Pancreas (tissue), 10 donors: ENCODE measurements at regions of chr12 and their contacts with region 1.

Region 1: GRCh38 chr12:13534645-13535398 is 338.3 kb downstream of the EMP1 start:
- DNase-seq: peak; percentile 22 to 88 (median 50)
- ATAC-seq: peak in 3 of 4 donors; percentile 69 to 79 (median 74)
- H3K4me3 ChIP-seq: no peak overlapping the region
- H3K27ac ChIP-seq: no peak overlapping the region
- H3K4me1 ChIP-seq: no peaks in the 10 kb centered on the region
- H3K27me3 ChIP-seq: no peaks in the 10 kb centered on the region
- CTCF ChIP-seq: peak; percentile 73 to 84 (median 82)

Region 2: DNA sequence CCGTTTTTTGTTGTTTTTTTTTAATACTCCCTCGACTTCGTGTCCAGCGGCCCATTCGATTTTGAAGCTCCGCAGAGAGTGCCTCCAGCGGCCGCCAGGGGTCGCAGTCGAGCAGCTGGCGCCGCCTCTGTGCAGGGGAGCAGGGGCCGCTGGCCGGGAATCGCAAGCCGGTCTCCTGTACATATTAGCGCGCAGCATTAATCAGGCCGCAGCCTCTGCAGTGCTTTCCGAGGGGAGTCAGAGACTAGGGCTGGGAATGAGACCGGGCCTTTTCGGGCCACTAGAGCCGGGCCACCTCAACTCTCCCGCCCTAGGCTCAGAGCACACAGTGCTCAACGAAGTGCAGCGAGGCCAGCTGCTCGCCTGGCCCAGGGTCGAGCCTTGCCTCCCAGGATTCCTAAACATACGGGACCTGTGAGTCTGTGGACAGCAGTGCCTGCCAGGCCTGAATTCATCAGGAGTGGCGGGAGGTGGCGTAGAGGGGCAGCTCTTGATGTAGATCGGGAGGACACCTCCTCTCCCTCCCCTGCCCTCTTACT is 256.5 kb before region 1 on chr12:
- intact Hi-C with region 1: loop called in 1 of 3 experiments (anchors 5 kb)
- DNase-seq: peak; percentile 44 to 91 (median 77)
- ATAC-seq: peak; percentile 94 to 99 (median 98)
- H3K4me3 ChIP-seq: no peak overlapping the region
- H3K27ac ChIP-seq: no peak overlapping the region
- H3K4me1 ChIP-seq: peaks cover 0 to 3% (median 0%) of the 10 kb centered on the region in 3 donors
- H3K27me3 ChIP-seq: peaks cover 0 to 11% (median 0%) of the 10 kb centered on the region in 4 donors
- CTCF ChIP-seq: peak; percentile 95 to 99 (median 98)

Region 3: DNA sequence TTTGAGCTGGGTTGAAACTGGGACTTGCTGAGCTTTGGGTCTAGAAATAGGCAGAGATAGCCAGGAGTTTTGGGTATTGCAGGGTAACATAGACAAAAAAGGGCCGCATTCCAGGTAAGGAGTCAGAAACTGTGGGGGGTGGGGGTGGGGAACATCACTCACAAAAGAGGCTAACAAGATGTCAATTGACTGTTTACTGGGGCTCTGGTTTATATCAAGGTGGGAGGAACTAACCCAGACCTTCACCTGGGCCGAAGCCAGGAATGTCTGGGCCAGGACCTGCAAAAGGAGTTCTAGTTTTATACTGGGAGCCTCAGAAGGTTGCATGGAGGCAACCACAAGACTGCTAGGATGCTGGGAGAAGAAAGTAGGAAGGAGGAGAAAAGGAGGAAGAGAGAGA is 183.9 kb before region 1 on chr12:
- intact Hi-C with region 1: loop called in 1 of 3 experiments (anchors 10 kb)
- DNase-seq: no peak
- ATAC-seq: no peak
- H3K4me3 ChIP-seq: no peak overlapping the region
- H3K27ac ChIP-seq: no peak overlapping the region
- H3K4me1 ChIP-seq: no peaks in the 10 kb centered on the region
- H3K27me3 ChIP-seq: peaks cover 0 to 6% (median 0%) of the 10 kb centered on the region in 4 donors
- CTCF ChIP-seq: no peak

Region 4: DNA sequence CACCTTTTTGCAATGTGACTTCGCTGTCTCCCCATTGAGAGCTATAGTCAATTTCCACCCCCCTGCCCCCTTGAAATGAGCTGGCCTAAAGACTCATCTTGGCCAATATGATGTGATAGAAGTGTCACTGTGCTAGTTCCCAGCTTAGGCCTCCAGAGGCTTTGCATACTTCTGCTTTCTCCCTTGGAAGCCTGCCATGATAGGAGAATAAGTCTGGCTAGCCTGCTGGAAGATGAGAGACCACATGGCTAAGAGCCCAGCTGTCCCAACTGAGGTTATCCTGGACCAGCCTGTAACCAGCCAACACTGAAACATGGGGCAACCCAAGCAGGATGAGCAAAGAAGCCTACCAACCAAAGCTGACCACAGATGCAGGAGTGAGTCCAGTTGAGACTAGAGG is 249.7 kb after region 1 on chr12:
- intact Hi-C with region 1: no loop called
- DNase-seq: no peak
- ATAC-seq: no peak
- H3K4me3 ChIP-seq: no peak overlapping the region
- H3K27ac ChIP-seq: no peak overlapping the region
- H3K4me1 ChIP-seq: no peaks in the 10 kb centered on the region
- H3K27me3 ChIP-seq: no peaks in the 10 kb centered on the region
- CTCF ChIP-seq: no peak